Esophagus squamous epithelium (tissue), 5 donors: ENCODE measurements at regions of chr12 and their contacts with region 1.

Region 1: GRCh38 chr12:28189784-28190320 is 404 bp upstream of the CCDC91 start:
- DNase-seq: no peak
- H3K4me3 ChIP-seq: peak overlapping the region; percentile 77 to 82 (median 80)
- H3K27ac ChIP-seq: peak overlapping the region; percentile 97 to 99 (median 98)
- H3K4me1 ChIP-seq: peaks cover 0 to 25% (median 6%) of the 10 kb centered on the region in 3 donors
- H3K27me3 ChIP-seq: no peaks in the 10 kb centered on the region
- CTCF ChIP-seq: no peak
- POLR2A ChIP-seq: no peak

Region 2: GRCh38 chr12:27969624-27970400 is 220.0 kb before region 1 on chr12:
- intact Hi-C with region 1: loop called (anchors 10 kb)
- DNase-seq: no peak
- H3K4me3 ChIP-seq: peak overlapping the region; percentile 53 to 77 (median 61)
- H3K27ac ChIP-seq: peak overlapping the region; percentile 67 to 91 (median 85)
- H3K4me1 ChIP-seq: peaks cover 12 to 86% (median 28%) of the 10 kb centered on the region in 3 donors
- H3K27me3 ChIP-seq: peaks cover 0 to 76% (median 3%) of the 10 kb centered on the region in 4 donors
- CTCF ChIP-seq: peak in 1 of 6 experiments; percentile 15
- POLR2A ChIP-seq: peak in 2 of 4 donors; percentile 24 to 33

Region 3: DNA sequence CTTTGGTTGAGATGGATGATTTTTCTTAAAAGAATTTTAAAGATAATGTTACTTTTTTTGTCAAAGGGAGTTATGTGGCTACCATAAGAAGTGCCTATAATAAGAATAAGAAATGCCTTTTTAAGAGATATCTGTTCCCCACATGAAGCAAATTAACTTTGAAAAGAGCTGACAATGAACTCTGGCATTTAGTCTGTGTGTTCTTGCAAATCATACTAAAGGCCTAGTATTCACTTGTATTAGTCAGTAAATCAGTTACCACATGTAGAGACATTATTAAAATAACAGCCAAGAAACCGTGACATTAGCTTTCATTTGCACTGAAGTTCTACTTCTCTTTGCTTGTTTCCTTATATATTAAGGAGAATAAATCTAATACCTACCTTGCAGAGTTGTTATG is 296.7 kb after region 1 on chr12:
- intact Hi-C with region 1: no loop called
- DNase-seq: no peak
- H3K4me3 ChIP-seq: no peak overlapping the region
- H3K27ac ChIP-seq: no peak overlapping the region
- H3K4me1 ChIP-seq: no peaks in the 10 kb centered on the region
- H3K27me3 ChIP-seq: no peaks in the 10 kb centered on the region
- CTCF ChIP-seq: no peak
- POLR2A ChIP-seq: no peak